ENCODE measurements at regions of chr7 and their contacts with region 1.

Region 1: GRCh38 chr7:16078076-16078952 is 343.0 kb downstream of the CRPPA start:
- DNase-seq: peak; percentile 76
- ATAC-seq: peak; percentile 92
- H3K4me3 ChIP-seq: no peak overlapping the region
- H3K27ac ChIP-seq: no peak overlapping the region
- H3K4me1 ChIP-seq: no peaks in the 10 kb centered on the region
- H3K27me3 ChIP-seq: no peaks in the 10 kb centered on the region
- CTCF ChIP-seq: peak; percentile 89

Region 2: DNA sequence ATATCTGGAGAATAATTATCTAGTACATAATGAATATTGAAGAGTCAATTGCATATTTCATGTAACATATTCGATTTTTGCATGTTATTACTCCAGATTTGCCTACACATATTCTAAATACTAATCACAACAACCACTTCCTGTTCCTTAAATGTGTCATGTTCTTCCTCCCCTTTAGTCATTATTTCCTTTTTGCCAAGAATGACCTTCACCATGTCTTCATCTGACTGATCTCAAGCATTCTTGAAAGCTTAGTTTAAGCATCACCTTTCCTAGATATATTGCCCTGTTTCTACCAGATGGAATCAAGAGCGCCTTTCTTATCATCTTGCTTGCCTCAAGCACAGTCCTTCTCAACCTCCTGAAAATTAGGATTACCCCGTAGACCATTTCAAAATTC is 368.3 kb before region 1 on chr7:
- CTCF ChIA-PET with region 1: no interaction called
- POLR2A ChIA-PET with region 1: no interaction called
- intact Hi-C with region 1: no loop called
- DNase-seq: peak; percentile 17
- ATAC-seq: no peak; the same call in 1 of the 2 replicates
- H3K4me3 ChIP-seq: no peak overlapping the region
- H3K27ac ChIP-seq: no peak overlapping the region
- H3K4me1 ChIP-seq: 0 out of 2 replicates have a peak, but pooled peaks cover 3% of the 10 kb centered on the region
- H3K27me3 ChIP-seq: no peaks in the 10 kb centered on the region
- CTCF ChIP-seq: no peak

Region 3: GRCh38 chr7:15947754-15948153 is 130.6 kb before region 1 on chr7:
- CTCF ChIA-PET with region 1: no interaction called
- POLR2A ChIA-PET with region 1: no interaction called
- intact Hi-C with region 1: no loop called
- DNase-seq: no peak
- ATAC-seq: no peak
- H3K4me3 ChIP-seq: no peak overlapping the region
- H3K27ac ChIP-seq: no peak overlapping the region
- H3K4me1 ChIP-seq: no peaks in the 10 kb centered on the region
- H3K27me3 ChIP-seq: no peaks in the 10 kb centered on the region
- CTCF ChIP-seq: no peak

Region 4: DNA sequence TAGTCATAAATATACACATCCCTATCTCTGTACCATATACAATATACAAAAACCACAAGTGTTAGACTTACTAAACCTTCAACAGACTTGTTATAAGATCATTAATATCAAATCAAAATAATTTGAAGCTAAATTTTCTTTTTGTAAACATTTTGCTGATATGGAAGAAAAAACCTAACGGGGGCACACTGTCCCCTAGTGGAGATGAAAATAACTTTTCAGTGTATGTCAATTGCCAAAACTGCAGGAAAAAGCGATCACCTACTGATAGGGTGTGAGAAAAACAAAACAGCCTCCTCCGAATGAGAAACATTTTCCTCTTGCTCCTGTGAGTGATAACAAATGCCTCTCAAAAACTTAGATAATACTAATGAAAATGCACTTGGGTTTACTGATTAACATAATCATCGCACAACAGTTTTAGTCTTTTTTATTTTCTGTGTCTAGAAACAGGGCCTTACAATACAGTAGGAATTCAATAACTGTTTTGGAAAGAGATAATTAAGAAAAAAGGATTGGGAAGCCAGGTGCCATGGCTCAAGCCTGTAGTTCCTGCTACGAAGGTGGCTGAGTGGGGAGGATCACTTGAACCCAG is 20.4 kb after region 1 on chr7:
- CTCF ChIA-PET with region 1: interaction called, 10 read pairs
- POLR2A ChIA-PET with region 1: no interaction called
- intact Hi-C with region 1: loop called (anchors 1 kb)
- DNase-seq: peak; percentile 53
- ATAC-seq: peak; percentile 57; the same call in 1 of the 2 replicates
- H3K4me3 ChIP-seq: no peak overlapping the region
- H3K27ac ChIP-seq: no peak overlapping the region
- H3K4me1 ChIP-seq: 0 out of 2 replicates have a peak, but pooled peaks cover 9% of the 10 kb centered on the region
- H3K27me3 ChIP-seq: no peaks in the 10 kb centered on the region
- CTCF ChIP-seq: peak; percentile 94

Region 5: GRCh38 chr7:16260236-16260728 is 182.0 kb after region 1 on chr7:
- CTCF ChIA-PET with region 1: no interaction called
- POLR2A ChIA-PET with region 1: no interaction called
- intact Hi-C with region 1: no loop called
- DNase-seq: no peak
- ATAC-seq: no peak
- H3K4me3 ChIP-seq: no peak overlapping the region
- H3K27ac ChIP-seq: no peak overlapping the region
- H3K4me1 ChIP-seq: no peaks in the 10 kb centered on the region
- H3K27me3 ChIP-seq: no peaks in the 10 kb centered on the region
- CTCF ChIP-seq: no peak

Measured in PC-3 (cell line).